RWPE1 (cell line): ENCODE measurements at regions of chr13 and their contacts with region 1.

Region 1: DNA sequence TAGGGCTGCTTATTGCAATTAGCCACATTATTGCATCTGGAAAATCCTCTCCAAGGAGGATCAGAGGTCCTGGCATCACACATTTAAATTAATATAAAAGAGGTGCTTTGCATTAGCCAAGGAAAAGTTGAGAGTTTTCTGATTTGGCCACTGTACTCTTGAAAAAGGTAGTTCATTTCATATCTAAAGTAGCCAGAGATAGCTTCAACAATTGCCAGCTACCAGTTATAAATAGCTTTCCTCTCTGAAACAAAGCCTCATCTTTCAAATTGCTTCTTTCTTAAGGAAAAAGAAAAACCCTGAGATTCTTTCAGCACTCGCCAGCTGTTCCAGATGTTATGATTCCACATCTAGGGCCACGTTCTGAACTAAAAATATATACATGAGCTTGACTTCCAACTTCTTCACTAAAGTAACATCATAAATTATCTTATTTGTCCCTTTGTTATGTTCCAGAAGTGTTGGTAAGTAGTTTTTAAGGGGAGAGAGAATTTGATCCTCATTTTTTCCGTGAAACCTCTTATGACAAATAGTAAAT is 69.6 kb downstream of the ERCC5 start:
- DNase-seq: no peak
- H3K27ac ChIP-seq: no peak overlapping the region
- CTCF ChIP-seq: no peak

Region 2: GRCh38 chr13:102904408-102904862 is 11.0 kb before region 1 on chr13:
- CTCF ChIA-PET with region 1: interaction called, 10 read pairs
- POLR2A ChIA-PET with region 1: no interaction called
- DNase-seq: peak; percentile 50
- H3K27ac ChIP-seq: no peak overlapping the region
- CTCF ChIP-seq: no peak